Keratinocyte (primary cell): ENCODE measurements at regions of chr19 and their contacts with region 1.

Region 1: DNA sequence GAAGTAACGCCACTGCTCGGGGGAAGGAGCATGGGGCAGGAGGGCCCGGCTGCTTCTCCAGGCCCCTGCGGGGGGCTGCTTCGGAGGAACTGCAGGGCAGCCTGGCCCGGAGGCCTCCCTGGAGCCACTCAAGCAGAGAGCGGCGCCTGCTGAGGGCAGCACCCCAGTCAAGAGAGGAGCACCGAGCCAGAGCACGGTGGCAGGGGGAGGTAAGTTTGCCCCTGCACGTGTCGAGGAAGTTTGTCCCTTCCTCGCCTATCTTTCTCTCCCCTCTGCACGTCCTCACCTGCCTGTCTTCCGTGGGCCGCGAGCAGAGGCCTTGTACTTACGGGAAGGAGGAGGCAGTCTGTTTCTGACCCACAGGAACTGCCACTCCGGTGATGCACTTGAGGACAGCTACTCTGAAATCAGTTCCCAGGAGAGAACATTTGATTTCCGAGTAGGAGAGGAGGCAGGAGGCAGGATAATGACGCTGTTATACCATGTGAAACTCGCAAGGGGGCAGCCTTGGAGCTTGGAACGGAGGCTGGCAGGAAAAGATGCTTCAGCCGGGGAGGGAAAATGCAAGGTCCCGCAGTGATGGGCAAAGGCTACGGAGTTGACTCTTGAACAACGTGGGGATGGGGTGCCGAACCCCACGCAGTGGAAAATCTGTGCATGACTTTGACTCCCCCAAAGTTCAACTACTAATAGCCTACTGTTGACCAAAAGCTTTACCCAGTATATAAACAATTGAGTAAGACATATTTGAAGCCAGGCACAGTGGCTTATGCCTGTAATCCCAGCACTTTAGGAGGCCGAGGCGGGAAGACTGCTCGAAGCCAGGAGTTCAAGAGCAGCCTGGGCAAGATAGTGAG is 5.0 kb downstream of the FFAR1 start:
- DNase-seq: peak; percentile 53
- H3K4me3 ChIP-seq: no peak overlapping the region
- H3K27ac ChIP-seq: no peak overlapping the region
- H3K4me1 ChIP-seq: no peaks in the 10 kb centered on the region
- H3K27me3 ChIP-seq: peaks cover 10% of the 10 kb centered on the region
- CTCF ChIP-seq: peak; percentile 78 to 92 (median 90)

Region 2: GRCh38 chr19:35430409-35431144 is 77.9 kb after region 1 on chr19:
- dilution Hi-C with region 1: loop called (anchors 5 kb)
- DNase-seq: no peak
- H3K4me3 ChIP-seq: no peak overlapping the region
- H3K27ac ChIP-seq: no peak overlapping the region
- H3K4me1 ChIP-seq: no peaks in the 10 kb centered on the region
- H3K27me3 ChIP-seq: peaks cover 5% of the 10 kb centered on the region
- CTCF ChIP-seq: no peak

Region 3: GRCh38 chr19:35509861-35510625 is 157.4 kb after region 1 on chr19:
- dilution Hi-C with region 1: no loop called
- DNase-seq: peak; percentile 78
- H3K4me3 ChIP-seq: peak overlapping the region; percentile 63 to 94 (median 88)
- H3K27ac ChIP-seq: peak overlapping the region; percentile 81
- H3K4me1 ChIP-seq: peaks cover 16% of the 10 kb centered on the region
- H3K27me3 ChIP-seq: peaks cover 5% of the 10 kb centered on the region
- CTCF ChIP-seq: peak; percentile 92 to 97 (median 95)

Region 4: GRCh38 chr19:35585848-35586247 is 233.2 kb after region 1 on chr19 and contains the start of gene PMIS2:
- dilution Hi-C with region 1: no loop called
- DNase-seq: no peak
- H3K4me3 ChIP-seq: no peak within 1 kb of the TSS
- H3K27ac ChIP-seq: no peak within 1 kb of the TSS
- H3K4me1 ChIP-seq: no peaks in the 10 kb centered on the region
- H3K27me3 ChIP-seq: no peaks in the 10 kb centered on the region
- CTCF ChIP-seq: no peak
- polyA plus RNA-seq, gene PMIS2: not detected in 3 replicates

Region 5: DNA sequence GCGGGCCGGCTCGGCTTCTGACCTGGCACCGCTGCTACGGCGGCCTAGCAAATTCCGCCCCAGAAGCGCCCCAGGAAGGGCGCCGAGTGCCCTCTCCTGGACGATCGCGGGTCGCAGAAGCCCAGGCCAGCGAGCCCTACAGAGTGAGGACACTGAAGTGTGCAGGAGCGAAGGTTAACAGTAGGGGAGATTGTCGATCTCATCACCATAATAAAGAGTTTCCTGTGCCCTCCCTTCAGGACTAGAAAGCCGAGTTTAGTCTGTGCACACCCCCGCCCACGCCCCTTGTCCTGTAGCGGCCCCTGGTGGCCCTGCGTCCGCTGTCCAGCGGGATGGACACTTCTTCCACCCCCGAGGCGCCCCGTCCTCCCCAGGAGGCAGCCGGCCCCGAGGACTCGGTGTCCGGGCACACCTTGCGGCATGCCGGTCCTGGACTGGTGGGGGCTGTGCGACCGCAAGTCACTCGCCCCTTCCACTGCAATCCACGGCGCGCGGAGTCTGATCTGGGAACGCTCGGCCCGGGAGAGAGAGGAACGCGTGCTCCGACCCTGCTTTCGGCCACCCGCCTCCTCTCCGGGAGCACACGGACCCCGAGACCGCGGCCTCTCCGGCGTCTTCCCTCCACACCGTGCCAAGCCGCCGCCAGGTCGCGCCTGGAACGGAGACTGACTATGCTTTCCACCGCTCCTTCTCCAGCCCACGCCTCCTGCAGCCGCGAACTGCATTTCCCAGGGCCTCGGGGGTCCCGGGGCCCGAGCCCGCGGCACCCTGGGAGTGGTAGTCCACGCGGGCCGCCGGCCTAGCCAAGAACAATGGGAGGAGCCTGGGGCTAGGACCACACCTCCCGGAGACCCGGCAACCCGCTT is 364.4 kb after region 1 on chr19:
- dilution Hi-C with region 1: no loop called
- DNase-seq: peak; percentile 69
- H3K4me3 ChIP-seq: peak overlapping the region; percentile 76 to 86 (median 85)
- H3K27ac ChIP-seq: peak overlapping the region; percentile 52
- H3K4me1 ChIP-seq: peaks cover 22% of the 10 kb centered on the region
- H3K27me3 ChIP-seq: no peaks in the 10 kb centered on the region
- CTCF ChIP-seq: peak; percentile 71 to 84 (median 82)